Activated CD8-positive, alpha-beta T cell treated with anti-CD3 and anti-CD28 coated beads for 36 hours (primary cell): ENCODE measurements at regions of chr9 and their contacts with region 1.

Region 1: DNA sequence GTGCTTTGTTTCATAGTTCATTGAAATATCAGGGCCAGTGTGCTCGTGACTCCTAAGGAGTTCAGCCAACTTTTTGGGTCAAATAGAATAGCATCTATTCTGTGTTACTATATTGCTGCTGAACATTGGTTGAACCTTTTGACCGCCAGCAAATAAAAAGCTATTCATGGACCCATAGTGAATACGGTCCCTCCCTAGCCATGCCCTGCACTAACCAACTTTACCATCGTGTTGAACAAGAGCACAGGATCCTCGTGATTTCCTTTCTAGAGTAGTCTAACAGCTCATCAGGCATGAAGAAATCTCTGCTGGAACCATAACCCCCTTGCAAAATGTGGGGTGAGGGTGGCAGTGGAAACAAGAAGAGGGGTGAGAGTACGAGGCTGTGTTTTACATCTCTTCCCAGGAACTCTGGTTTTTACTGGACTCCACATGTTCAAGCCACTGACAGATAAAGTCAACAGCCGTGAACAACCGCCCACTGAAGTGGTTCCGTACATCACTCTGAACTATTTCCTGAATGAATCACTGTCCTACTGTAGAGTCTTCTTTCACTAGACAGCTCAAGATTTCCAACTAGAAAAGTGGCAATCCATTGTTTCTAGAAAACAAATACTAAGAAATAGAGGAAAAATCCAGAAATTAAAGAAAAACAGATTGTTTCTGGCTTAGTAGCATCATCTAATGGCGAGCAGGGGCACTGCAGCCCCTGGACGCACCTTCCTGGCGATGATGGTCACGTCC is 70.1 kb upstream of the SPATA31E1 start:
- DNase-seq: peak; percentile 47
- ATAC-seq: peak; percentile 82
- H3K4me3 Mint-ChIP-seq: no peak overlapping the region
- H3K27ac Mint-ChIP-seq: no peak overlapping the region
- H3K4me1 Mint-ChIP-seq: peaks cover 3% of the 10 kb centered on the region
- H3K27me3 Mint-ChIP-seq: peaks cover 17% of the 10 kb centered on the region
- CTCF ChIP-seq: peak; percentile 62

Region 2: GRCh38 chr9:87336914-87337333 is 475.6 kb before region 1 on chr9:
- CTCF ChIA-PET with region 1: no interaction called
- POLR2A ChIA-PET with region 1: no interaction called
- intact Hi-C with region 1: loop called (anchors 10 kb)
- DNase-seq: peak; percentile 22
- ATAC-seq: peak; percentile 34
- H3K4me3 Mint-ChIP-seq: peak overlapping the region; percentile 53
- H3K27ac Mint-ChIP-seq: no peak overlapping the region
- H3K4me1 Mint-ChIP-seq: peaks cover 10% of the 10 kb centered on the region
- H3K27me3 Mint-ChIP-seq: peaks cover 28% of the 10 kb centered on the region
- CTCF ChIP-seq: peak; percentile 80

Region 3: DNA sequence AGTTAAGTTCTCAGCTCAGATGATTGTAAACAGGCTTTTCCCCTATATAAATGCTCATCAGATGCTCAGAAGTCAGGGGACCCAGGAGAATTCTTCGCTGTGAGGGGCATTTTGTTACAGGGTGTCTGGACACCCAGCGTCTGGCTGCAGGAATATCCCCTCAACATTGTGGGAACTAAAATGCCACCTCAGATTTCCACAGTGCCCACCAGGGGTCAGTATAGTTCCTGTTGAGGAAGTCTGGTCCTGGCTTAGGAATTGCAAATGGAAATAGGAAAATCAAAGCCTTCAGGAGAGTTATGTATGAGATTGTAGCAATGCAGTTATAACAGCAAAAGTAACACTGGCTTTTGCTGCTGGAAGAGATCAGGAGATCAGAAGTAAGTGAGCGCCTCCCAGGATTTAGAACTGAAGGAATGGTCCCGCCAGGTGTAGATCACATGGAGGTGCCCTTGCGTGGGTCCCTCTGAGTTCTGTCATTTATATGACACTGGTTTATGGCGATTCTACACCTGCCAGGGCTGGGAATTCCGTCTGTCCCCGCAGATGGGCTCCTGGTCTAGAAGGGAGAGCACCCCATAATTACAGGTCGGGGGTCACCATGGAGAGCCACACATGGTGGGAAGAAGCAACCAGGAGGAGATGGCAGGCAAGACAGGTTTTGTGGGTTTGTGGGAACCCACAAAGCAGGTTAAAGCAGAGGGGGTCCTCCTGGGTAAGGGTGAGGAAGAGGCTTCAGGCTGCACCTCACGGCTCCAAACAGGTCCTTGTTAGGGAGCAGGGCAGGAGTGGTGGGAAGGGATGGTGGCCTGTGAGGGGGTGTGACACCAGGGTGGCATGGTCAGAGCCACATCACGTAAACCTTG is 133.7 kb before region 1 on chr9:
- CTCF ChIA-PET with region 1: interaction called, 8 read pairs
- POLR2A ChIA-PET with region 1: no interaction called
- intact Hi-C with region 1: loop called (anchors 10 kb)
- DNase-seq: peak; percentile 44
- ATAC-seq: no peak
- H3K4me3 Mint-ChIP-seq: no peak overlapping the region
- H3K27ac Mint-ChIP-seq: no peak overlapping the region
- H3K4me1 Mint-ChIP-seq: no peaks in the 10 kb centered on the region
- H3K27me3 Mint-ChIP-seq: no peaks in the 10 kb centered on the region
- CTCF ChIP-seq: peak; percentile 80